ENCODE measurements at regions of chr6 and their contacts with region 1.

Region 1: DNA sequence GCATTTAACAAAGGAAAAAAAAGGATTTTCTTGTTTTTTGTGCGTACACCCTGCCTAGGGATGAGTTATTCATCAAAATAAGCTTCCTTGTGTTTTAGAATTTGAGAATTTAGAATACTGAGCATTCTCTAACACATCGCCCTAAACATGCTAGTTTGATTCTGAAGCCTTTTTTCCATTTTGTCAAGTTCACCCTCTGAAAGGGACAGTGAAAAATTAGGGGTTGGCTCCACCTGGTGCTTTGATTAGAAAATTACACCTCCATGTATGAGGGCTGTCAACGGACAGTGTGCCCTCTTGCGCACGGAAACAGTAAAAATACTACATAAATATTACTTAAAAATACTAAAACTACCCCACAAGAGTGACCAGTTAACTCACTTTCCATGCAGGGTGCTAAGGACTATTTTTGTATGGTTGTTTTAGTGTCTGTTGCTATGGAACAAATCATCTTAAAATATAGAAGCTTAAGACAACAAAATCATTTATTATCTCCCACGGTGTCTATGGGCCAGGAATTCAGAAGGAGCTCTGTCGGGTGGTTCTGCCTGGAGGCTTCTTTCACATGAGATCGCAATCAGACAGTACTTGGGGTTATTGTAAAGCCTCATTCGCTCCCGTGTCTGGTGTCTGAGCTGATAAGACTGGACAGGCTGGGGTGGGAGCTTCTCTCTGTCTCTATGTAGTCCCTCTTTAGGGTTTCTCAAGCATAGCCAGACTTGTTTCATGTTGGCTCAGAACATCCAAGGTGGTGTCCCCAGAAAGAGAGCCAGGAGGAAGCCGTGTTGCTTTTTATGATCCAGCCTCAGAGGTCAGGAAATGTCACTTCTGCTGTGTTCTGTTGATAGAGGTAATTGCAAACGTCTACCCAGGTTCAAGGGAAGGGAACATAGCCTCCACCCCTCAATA is 41.1 kb upstream of the TMEM170B start:
- DNase-seq: peak; percentile 63 to 77
- H3K4me3 ChIP-seq: no peak overlapping the region
- H3K27ac ChIP-seq: peak overlapping the region; percentile 49
- H3K4me1 ChIP-seq: peaks cover 12% of the 10 kb centered on the region
- H3K27me3 ChIP-seq: no peaks in the 10 kb centered on the region
- CTCF ChIP-seq: peak; percentile 87

Region 2: DNA sequence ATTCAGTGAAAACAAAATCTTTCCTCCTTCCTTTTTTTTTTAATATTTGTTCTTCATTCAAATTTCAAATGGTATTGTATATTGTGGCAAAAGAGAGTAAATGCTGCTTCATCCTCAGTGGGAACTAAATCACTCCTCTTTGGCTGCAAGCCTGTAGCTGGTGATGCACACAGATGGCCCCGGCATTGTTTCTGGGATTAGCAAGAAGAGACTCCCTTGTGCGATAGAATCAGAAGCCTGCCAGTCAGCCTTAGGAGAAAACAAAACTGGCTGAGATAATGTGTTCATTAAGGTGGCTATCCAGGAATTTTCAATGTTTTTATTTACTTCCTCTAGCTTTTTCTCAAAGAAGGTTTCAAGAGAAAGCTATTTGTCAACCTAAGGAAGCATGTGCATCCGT is 431.6 kb before region 1 on chr6:
- CTCF ChIA-PET with region 1: no interaction called
- POLR2A ChIA-PET with region 1: no interaction called
- intact Hi-C with region 1: loop called (anchors 1 kb)
- DNase-seq: no peak
- H3K4me3 ChIP-seq: no peak overlapping the region
- H3K27ac ChIP-seq: no peak overlapping the region
- H3K4me1 ChIP-seq: no peaks in the 10 kb centered on the region
- H3K27me3 ChIP-seq: no peaks in the 10 kb centered on the region
- CTCF ChIP-seq: no peak

Region 3: DNA sequence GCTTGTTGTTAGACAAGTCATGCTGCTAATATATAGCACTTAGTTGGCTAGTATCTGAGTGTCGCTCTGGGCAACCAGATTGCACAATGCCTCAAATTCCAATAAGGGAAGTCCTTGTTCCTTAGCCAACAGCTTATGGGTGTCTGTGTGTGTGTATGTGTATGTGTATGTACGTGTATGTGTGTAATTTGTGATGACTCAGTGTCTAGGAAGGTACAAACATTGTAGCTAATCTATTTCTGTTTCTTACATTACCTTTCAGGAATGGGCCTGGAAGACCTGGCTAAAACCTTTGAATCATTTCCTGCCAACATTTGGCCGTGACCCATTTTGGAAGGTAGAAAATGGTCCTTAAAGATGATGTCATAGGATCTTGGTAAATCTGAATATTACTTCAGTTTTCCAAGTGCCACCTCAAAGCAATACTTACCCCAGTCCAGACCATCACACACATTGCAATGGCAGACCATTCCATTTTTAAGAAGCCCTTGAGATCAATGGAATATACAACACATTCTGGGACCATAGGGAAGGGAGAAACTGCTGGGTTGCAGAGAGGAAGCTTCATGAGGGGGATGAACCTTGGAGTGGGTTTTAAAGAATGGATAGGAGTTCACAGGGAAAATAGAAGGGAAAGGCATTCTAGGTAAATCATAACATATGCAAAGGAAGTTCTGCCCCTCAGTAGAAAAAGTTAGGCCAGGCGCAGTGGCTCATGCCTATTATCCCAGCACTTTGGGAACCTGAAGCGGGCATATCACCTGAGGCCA is 289.0 kb before region 1 on chr6:
- CTCF ChIA-PET with region 1: interaction called, 3 read pairs
- POLR2A ChIA-PET with region 1: interaction called, 12 read pairs
- intact Hi-C with region 1: loop called (anchors 1 kb)
- DNase-seq: peak; percentile 84 to 98
- H3K4me3 ChIP-seq: no peak overlapping the region; the same call in 1 of the 2 replicates
- H3K27ac ChIP-seq: peak overlapping the region; percentile 92
- H3K4me1 ChIP-seq: peaks cover 36% of the 10 kb centered on the region
- H3K27me3 ChIP-seq: no peaks in the 10 kb centered on the region
- CTCF ChIP-seq: no peak

Region 4: DNA sequence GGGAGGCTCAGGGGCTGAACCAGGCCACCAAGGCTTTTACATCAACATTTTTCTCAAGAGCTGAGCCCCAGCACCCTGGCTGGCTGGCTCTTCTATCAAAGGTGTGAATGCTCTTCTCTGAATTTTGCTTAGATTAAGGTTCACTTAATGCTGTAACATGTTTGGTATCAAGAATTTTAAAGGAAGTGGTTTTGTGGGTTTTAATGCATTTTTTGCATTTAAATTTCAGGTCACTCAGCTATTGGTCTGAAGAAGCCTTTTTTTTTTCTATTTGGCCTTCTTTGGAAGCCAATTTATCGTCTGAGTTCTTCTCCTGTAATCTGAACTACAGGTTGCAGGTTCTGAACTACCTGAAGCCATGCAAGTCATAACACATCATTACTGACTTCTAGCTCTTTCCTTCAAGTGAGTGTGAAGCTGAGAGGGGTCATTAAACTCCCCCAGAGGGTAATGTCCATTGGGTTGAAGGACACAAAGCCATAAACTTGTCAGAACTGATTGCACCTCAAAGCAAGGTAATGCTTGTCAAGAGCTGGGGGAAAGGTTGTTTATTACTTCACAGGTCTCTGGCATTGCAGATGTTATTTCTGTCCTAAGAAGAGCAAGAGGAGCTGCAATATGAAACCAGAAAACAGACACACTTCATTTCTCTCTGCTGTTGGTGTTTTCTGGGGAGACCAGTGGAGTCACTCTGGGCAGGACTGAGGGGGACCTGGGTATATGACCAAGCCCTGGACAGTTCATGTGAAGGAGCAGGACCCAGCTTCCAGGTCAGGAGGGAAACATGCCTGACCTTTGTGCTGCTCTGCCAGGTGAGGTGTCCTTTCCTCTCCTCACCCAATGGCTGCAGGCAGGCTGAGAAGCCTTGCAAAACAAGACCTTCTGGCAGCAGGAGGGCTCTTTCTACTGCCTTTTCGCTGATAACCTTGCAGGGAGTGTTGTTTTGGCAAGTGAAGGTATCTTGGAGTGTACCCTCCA is 237.9 kb before region 1 on chr6:
- CTCF ChIA-PET with region 1: no interaction called
- POLR2A ChIA-PET with region 1: no interaction called
- intact Hi-C with region 1: no loop called
- DNase-seq: peak in 1 of 2 experiments; percentile 58
- H3K4me3 ChIP-seq: peak overlapping the region; percentile 8; the same call in 1 of the 2 replicates
- H3K27ac ChIP-seq: peak overlapping the region; percentile 62
- H3K4me1 ChIP-seq: peaks cover 37% of the 10 kb centered on the region
- H3K27me3 ChIP-seq: no peaks in the 10 kb centered on the region
- CTCF ChIP-seq: no peak

Region 5: DNA sequence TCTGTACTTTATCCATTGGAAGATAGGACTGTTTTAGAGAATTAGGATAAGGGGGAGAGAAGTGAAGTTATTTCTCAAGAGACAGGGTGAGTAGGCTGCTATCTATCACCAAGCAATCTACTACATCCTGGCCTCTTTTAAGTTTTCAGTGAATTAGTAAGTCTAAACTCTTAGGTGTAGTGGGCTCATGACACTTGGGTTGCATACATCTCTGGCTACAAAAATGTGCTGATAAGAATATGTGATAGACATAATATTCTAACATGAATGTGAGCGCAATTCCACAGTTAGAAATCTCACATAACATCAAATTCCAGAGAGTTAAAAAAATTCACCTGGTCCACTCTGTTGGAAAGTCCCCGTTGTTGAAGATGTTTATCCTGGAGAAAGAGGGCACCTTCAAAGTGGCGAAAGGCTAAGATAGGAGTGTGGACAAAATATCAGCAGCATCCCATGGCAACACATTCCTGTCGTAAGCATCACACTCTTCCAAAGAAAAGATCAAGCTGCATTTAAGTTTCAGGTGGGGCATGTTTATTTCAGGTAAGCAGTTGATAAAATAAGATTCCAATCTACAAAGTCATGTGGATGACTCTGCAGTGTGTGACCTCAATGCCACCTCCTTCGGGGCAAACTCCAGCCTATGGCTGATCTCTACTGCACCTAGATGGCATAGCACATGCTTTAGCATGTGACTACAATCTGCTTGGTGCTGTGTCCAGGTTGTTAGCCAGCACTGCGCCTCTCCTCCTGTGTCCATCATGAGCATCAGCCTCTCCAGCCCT is 152.3 kb before region 1 on chr6:
- CTCF ChIA-PET with region 1: interaction called, 6 read pairs
- POLR2A ChIA-PET with region 1: no interaction called
- intact Hi-C with region 1: loop called (anchors 1 kb)
- DNase-seq: peak; percentile 85 to 98
- H3K4me3 ChIP-seq: no peak overlapping the region
- H3K27ac ChIP-seq: peak overlapping the region; percentile 82
- H3K4me1 ChIP-seq: peaks cover 45% of the 10 kb centered on the region
- H3K27me3 ChIP-seq: no peaks in the 10 kb centered on the region
- CTCF ChIP-seq: no peak

Region 6: DNA sequence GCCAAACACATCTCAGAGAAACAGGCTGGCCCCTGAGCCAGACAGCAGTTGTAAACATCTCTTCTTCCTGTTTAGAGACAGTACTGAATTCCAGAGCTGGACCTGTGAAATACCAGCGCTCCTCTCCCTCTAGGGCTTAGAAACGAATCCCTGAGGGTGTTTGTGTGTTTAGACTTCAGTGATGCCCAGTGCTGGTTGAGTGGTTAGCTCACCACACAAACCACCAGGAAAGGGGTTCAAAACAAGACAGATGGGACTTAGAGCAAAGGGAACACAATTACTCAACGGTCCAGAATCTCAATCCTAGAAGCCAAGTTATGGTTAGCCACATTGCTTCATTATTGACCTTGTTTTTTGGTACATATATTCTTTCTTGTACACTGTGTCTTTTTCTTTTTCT is 67.5 kb before region 1 on chr6:
- CTCF ChIA-PET with region 1: interaction called, 7 read pairs
- POLR2A ChIA-PET with region 1: interaction called, 6 read pairs
- intact Hi-C with region 1: loop called (anchors 2 kb)
- DNase-seq: peak; percentile 47 to 89
- H3K4me3 ChIP-seq: no peak overlapping the region
- H3K27ac ChIP-seq: peak overlapping the region; percentile 80
- H3K4me1 ChIP-seq: peaks cover 90% of the 10 kb centered on the region
- H3K27me3 ChIP-seq: no peaks in the 10 kb centered on the region
- CTCF ChIP-seq: no peak